Activated CD4-positive, alpha-beta memory T cell treated with anti-CD3 and anti-CD28 coated beads for 36 hours (primary cell): ENCODE measurements at regions of chr10 and their contacts with region 1.

Region 1: GRCh38 chr10:6151087-6151977 is 51.4 kb upstream of the PFKFB3 start:
- DNase-seq: peak; percentile 61
- H3K4me3 Mint-ChIP-seq: no peak overlapping the region
- H3K27ac Mint-ChIP-seq: peak overlapping the region; percentile 15
- H3K4me1 Mint-ChIP-seq: peaks cover 47% of the 10 kb centered on the region
- H3K27me3 Mint-ChIP-seq: no peaks in the 10 kb centered on the region

Region 2: GRCh38 chr10:5376450-5376849 is 774.9 kb before region 1 on chr10:
- CTCF ChIA-PET with region 1: no interaction called
- POLR2A ChIA-PET with region 1: no interaction called
- intact Hi-C with region 1: no loop called
- DNase-seq: no peak
- H3K4me3 Mint-ChIP-seq: no peak overlapping the region
- H3K27ac Mint-ChIP-seq: no peak overlapping the region
- H3K4me1 Mint-ChIP-seq: no peaks in the 10 kb centered on the region
- H3K27me3 Mint-ChIP-seq: peaks cover 5% of the 10 kb centered on the region

Region 3: DNA sequence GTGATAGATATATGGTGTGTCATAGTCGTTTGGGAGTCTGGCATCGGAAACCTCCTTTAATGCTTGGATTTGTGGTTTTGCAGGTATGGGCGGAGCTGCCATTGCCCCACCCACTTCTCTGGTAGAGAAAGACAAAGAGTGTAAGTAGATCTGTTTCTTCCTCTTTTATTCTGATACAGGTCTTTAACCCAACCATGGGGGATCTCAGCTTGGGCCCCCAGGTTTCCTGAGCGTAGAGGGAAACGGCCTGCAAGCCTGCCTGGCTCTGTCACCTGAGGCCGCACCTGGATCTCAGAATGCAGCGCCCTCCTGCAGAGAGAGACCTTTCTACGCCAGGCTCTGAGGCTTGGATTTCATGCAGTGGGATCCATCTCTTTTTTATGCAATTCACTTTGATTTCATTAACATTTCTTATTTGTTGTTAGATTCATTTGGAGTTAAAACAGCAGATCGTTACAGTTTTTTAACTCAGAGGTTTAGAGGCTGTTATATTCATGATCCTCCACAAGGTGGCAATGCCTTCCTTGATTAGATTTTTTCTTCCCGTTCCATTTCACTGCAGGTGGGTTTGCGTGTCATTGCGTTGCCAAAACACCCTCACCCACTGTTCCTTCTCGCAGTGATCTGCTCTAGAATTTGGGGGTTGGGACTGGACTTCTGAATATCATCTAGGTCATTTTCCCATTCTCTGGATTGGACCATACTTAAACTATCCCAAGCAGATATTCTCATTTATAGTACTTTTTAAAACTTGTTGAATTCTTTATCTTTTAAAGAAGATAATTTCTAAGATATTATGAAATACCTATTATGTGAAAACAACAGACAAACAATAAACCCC is 42.5 kb before region 1 on chr10:
- CTCF ChIA-PET with region 1: interaction called, 39 read pairs
- POLR2A ChIA-PET with region 1: no interaction called
- intact Hi-C with region 1: loop called (anchors 1 kb)
- DNase-seq: peak; percentile 36
- H3K4me3 Mint-ChIP-seq: no peak overlapping the region
- H3K27ac Mint-ChIP-seq: peak overlapping the region; percentile 76
- H3K4me1 Mint-ChIP-seq: peaks cover 36% of the 10 kb centered on the region
- H3K27me3 Mint-ChIP-seq: no peaks in the 10 kb centered on the region

Region 4: DNA sequence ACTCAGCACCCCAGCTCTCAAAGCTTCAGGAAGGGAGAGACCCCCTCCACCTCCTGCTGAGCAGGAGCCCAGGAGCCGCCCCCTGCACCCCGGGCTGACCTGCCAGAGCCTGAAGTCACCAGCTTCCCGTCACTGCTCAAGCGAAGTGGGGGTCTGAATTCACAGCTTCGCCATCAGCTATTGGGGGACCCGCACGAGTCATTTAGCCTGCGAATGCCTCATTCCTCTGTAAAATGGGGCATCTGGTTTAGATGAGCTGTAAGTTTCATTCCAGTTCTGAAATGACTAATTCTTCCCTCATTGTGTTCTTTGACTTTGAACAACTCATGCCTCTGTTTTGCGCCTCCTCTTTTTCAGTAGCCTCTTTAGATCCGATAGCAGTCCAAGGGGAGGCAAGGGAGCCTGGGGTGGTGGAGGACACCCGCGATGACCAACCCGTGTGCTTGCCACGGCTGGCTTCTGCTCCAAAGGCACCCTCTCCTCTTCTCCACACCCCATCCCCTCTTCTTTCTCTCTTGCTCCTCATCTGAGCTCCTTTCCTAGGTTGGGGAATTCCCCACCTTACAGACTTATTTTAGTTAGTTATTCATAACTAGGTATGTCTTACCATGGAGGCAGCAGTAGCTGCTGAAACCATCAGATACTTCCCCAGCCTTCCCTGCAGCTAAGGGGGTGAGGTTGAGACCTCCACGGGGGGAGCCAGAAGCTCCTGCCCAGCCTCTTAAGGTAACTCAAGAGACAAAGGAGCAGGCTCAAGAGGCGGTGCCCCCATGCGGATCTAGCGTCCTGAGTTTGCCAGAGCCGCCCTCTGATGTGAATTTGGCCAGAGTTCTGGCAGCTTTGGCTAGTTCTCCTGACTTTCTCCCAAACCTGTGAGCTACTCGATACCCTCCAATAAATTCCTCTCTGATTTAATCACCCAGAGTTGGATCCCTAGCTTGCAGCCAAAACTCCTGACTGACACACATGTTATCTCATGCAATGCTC is 14.8 kb before region 1 on chr10:
- CTCF ChIA-PET with region 1: interaction called, 14 read pairs
- POLR2A ChIA-PET with region 1: interaction called, 5 read pairs
- intact Hi-C with region 1: no loop called
- DNase-seq: peak; percentile 88
- H3K4me3 Mint-ChIP-seq: peak overlapping the region; percentile 52
- H3K27ac Mint-ChIP-seq: peak overlapping the region; percentile 82
- H3K4me1 Mint-ChIP-seq: peaks cover 63% of the 10 kb centered on the region
- H3K27me3 Mint-ChIP-seq: peaks cover 10% of the 10 kb centered on the region

Region 5: GRCh38 chr10:6163364-6164270 is 12.3 kb after region 1 on chr10:
- CTCF ChIA-PET with region 1: interaction called, 23 read pairs
- POLR2A ChIA-PET with region 1: interaction called, 3 read pairs
- intact Hi-C with region 1: no loop called
- DNase-seq: peak; percentile 94
- H3K4me3 Mint-ChIP-seq: peak overlapping the region; percentile 80
- H3K27ac Mint-ChIP-seq: peak overlapping the region; percentile 94
- H3K4me1 Mint-ChIP-seq: peaks cover 59% of the 10 kb centered on the region
- H3K27me3 Mint-ChIP-seq: no peaks in the 10 kb centered on the region

Region 6: GRCh38 chr10:6208799-6209235 is 57.5 kb after region 1 on chr10:
- CTCF ChIA-PET with region 1: no interaction called
- POLR2A ChIA-PET with region 1: no interaction called
- intact Hi-C with region 1: no loop called
- DNase-seq: no peak
- H3K4me3 Mint-ChIP-seq: no peak overlapping the region
- H3K27ac Mint-ChIP-seq: no peak overlapping the region
- H3K4me1 Mint-ChIP-seq: peaks cover 19% of the 10 kb centered on the region
- H3K27me3 Mint-ChIP-seq: no peaks in the 10 kb centered on the region